ENCODE measurements at regions of chr14 and their contacts with region 1.

Region 1: GRCh38 chr14:67710209-67710608 is 8.5 kb downstream of the RDH12 start:
- DNase-seq: no peak
- ATAC-seq: no peak
- H3K4me3 ChIP-seq: no peak overlapping the region
- H3K27ac ChIP-seq: no peak overlapping the region
- H3K4me1 ChIP-seq: no peaks in the 10 kb centered on the region
- H3K27me3 ChIP-seq: no peaks in the 10 kb centered on the region
- CTCF ChIP-seq: no peak

Region 2: DNA sequence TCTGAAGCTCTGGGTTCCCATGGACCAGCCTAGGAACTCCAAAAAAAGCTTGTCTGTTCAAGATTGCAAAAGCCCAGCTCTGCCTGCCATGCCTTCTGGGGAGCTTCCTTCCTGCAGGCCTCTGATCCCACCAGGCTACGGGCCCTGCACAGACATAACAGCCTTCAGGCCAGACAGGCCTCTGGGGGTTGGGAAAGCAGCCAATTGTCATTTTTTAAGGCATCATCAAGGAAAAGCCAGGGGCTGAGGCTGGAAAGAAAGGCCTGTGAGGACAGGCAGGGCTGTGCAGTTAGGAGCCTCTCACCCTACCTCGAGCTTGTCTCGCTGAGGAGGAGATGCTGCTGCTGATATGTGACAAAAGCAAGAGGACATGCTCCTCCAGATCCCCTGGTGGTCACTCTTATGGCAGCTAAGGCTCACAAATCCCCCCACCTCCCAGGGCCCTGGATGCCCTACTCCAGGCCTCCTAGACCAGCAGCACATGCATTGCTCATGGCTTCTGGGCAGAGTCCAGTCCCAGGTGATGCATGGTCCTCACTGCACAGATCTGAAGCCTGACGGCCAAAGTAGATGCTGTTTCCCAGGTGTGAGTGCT is 224.6 kb before region 1 on chr14:
- CTCF ChIA-PET with region 1: no interaction called
- POLR2A ChIA-PET with region 1: interaction called, 10 read pairs
- in situ Hi-C with region 1: no loop called
- intact Hi-C with region 1: no loop called
- DNase-seq: no peak
- ATAC-seq: no peak; the same call in 1 of the 2 replicates
- H3K4me3 ChIP-seq: no peak overlapping the region
- H3K27ac ChIP-seq: no peak overlapping the region
- H3K4me1 ChIP-seq: no peaks in the 10 kb centered on the region
- H3K27me3 ChIP-seq: no peaks in the 10 kb centered on the region
- CTCF ChIP-seq: no peak

Region 3: DNA sequence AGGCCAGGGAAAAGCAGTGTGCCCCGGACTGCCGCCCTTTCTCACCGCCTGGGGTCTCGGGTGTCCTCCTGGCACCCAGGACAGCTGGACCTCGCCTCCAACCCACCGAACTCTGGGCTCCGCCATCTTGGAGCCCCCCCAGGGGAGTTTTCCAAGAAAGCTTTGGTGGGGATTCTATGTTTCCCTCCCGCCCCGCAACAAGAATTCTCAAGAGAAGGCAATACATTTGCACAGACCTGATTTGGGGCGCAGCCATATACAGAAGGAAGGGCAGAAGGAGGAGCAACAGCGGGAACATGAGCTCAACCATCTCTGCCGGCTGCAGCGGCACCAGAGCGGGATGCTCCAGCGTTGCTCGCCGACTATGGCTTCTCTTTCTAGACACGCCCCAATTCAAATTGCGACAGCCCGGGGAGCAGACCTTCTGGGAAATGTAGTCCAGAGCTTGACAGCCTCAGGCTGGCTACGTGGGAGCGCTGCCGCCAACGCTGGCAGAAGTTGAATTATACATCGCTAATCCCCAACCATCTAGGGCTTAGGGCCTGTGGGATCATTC is 14.7 kb before region 1 on chr14 and contains the start of gene RDH11:
- CTCF ChIA-PET with region 1: no interaction called
- POLR2A ChIA-PET with region 1: no interaction called
- in situ Hi-C with region 1: no loop called
- intact Hi-C with region 1: no loop called
- DNase-seq: no peak
- ATAC-seq: peak; percentile 99
- H3K4me3 ChIP-seq: peak within 1 kb of the TSS; percentile 97
- H3K27ac ChIP-seq: peak within 1 kb of the TSS; percentile 92
- H3K4me1 ChIP-seq: no peaks in the 10 kb centered on the region; the same call in 1 of the 2 replicates
- H3K27me3 ChIP-seq: no peaks in the 10 kb centered on the region
- CTCF ChIP-seq: no peak
- total RNA-seq, gene RDH11: 45.1 TPM

Region 4: GRCh38 chr14:67738740-67739504 is 28.7 kb after region 1 on chr14:
- CTCF ChIA-PET with region 1: interaction called, 3 read pairs
- POLR2A ChIA-PET with region 1: interaction called, 16 read pairs
- in situ Hi-C with region 1: no loop called
- intact Hi-C with region 1: no loop called
- DNase-seq: no peak
- ATAC-seq: no peak
- H3K4me3 ChIP-seq: no peak overlapping the region
- H3K27ac ChIP-seq: no peak overlapping the region
- H3K4me1 ChIP-seq: no peaks in the 10 kb centered on the region
- H3K27me3 ChIP-seq: no peaks in the 10 kb centered on the region
- CTCF ChIP-seq: no peak

Measured in Panc1 (cell line).